Activated CD4-positive, alpha-beta memory T cell treated with anti-CD3 and anti-CD28 coated beads, Interleukin-2, amount 10 ng/mL, durations not matched to agents 7 days and 5 days (primary cell): ENCODE measurements at regions of chr10 and their contacts with region 1.

Region 1: DNA sequence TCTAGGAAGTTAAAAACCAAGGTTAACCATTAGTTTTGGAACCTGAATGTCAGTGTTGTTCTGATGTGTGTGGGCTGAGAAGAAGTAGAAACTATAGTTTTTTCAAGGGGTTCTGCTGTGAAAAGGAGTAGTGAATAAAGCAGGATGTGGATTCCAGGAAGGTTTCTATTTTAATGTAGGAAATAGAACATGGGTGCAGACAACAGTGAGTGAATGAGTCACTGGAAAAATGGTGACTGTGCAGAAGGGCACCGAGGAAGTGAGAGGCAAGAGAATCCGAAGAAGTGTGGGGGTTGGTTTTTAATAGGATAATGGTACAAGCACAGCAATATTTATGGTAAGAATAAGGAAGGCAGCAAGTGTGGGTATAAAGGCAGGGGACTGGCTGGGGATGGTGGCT is 120.4 kb downstream of the ARHGAP21 start:
- DNase-seq: no peak
- H3K4me3 Mint-ChIP-seq: no peak overlapping the region
- H3K27ac Mint-ChIP-seq: peak overlapping the region; percentile 68
- H3K4me1 Mint-ChIP-seq: peaks cover 25% of the 10 kb centered on the region
- H3K27me3 Mint-ChIP-seq: no peaks in the 10 kb centered on the region

Region 2: GRCh38 chr10:24579906-24580305 is 23.4 kb before region 1 on chr10:
- CTCF ChIA-PET with region 1: no interaction called
- POLR2A ChIA-PET with region 1: no interaction called
- DNase-seq: no peak
- H3K4me3 Mint-ChIP-seq: no peak overlapping the region
- H3K27ac Mint-ChIP-seq: no peak overlapping the region
- H3K4me1 Mint-ChIP-seq: peaks cover 9% of the 10 kb centered on the region
- H3K27me3 Mint-ChIP-seq: peaks cover 15% of the 10 kb centered on the region

Region 3: DNA sequence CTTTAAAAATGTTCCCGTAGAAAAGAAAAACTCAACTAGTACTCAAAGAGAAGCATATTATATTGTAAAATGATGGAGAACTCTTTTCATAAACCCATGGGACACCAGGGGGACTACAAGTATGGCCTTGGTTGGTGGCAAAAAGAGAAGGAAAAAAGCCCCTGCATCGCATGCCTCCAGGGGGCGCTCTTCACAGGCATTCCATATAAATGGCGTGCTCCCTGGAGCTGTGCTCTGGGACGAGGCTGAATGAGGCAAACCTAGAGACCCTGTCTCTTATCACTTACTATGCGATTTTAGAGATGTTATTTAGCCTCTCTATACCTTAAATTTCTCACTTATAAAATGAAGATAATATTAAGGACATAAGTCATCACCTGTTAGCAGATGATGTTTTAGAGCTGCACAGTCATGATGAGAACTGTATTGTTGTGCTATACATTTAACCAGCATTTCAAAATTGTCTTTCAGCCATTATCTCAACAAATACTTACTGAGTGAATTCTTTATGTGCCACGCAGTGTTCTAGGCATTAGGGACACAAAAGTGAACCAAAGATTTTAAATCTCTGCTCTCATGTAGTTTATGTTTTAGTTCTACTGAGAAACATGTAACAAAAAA is 14.5 kb after region 1 on chr10:
- CTCF ChIA-PET with region 1: interaction called, 24 read pairs
- POLR2A ChIA-PET with region 1: interaction called, 3 read pairs
- DNase-seq: peak; percentile 43
- H3K4me3 Mint-ChIP-seq: no peak overlapping the region
- H3K27ac Mint-ChIP-seq: no peak overlapping the region
- H3K4me1 Mint-ChIP-seq: peaks cover 13% of the 10 kb centered on the region
- H3K27me3 Mint-ChIP-seq: no peaks in the 10 kb centered on the region